Sigmoid colon (tissue), 7 donors: ENCODE measurements at regions of chr11 and their contacts with region 1.

Region 1: DNA sequence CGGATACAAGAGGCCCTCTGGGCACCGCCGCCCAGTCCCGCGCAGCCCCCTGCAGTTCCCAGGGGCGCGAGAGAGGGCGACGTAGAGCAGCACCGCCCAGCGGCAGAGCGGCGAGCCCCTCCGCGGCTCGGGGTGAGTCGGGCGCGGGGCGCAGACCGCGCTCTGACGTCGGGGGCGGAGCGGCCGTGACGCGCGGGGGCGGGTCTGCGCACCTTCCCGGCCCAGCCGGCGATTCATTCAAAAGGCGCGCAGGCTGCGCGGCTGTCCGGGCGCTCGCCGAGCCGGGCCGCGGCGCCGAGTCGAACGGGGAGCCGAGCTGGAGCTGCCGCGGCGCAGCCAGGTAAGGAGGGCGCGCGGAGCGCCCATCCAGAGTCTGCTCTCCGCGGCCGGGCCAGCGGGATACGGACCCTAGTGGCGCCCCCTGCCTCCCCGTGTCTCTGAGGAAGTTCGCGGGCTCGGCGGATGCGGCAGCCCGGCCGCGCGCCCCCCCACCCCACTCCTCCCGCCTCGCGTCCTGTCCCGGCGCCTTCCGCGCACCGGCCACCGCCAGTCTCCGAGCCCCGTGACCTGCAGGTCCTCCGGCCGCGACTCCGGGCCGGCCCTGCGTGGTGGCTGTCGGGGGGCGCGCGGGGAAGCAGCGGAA is at the start of gene RELT:
- DNase-seq: peak; percentile 93
- H3K4me3 ChIP-seq: peak within 1 kb of the TSS; percentile 31 to 68 (median 62)
- H3K27ac ChIP-seq: peak within 1 kb of the TSS; percentile 77 to 87 (median 84)
- H3K4me1 ChIP-seq: peaks cover 0 to 18% (median 15%) of the 10 kb centered on the region in 4 donors
- H3K27me3 ChIP-seq: no peaks in the 10 kb centered on the region
- CTCF ChIP-seq: peak; percentile 84 to 90 (median 85)
- EP300 ChIP-seq: no peak
- POLR2A ChIP-seq: no peak
- total RNA-seq, gene RELT: 0.28 to 1.8 (median 0.95) TPM

Region 2: DNA sequence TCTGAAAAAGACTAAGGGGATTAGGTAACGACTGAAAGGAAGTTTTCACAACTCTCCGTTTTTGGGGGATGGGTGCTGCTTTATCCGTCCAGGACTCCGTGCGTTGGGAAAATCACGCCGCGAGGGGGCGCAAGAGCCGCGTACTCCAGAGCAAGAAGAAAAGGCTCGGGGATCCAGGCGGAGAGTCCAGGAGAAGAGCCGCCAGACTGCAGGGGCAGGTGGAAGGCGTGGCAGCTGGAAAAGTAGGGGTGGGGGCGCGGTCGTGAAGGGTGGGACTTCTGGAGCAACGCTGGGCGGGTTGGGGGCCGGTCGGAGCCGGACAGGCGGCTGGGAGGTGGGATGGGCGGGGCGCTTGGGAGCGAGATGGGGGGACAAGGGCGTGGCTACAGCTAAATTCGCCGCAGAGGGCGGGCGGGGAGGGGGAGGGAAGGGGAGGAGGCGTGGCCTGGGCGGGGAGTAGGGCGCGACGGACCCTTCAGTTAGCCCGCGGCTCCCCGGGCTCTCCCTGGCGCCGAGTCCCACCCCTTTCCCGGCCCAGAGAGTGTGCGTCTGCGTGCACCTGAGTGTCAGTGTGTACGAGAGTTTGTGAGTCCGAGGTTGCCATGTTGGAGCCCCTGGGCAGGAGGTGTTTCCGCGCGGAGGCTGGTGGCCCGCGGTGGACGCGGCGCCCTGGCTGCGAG is 68.8 kb before region 1 on chr11:
- intact Hi-C with region 1: loop called (anchors 1 kb)
- DNase-seq: peak; percentile 99
- H3K4me3 ChIP-seq: peak overlapping the region; percentile 59 to 85 (median 68)
- H3K27ac ChIP-seq: peak overlapping the region; percentile 94 to 100 (median 98)
- H3K4me1 ChIP-seq: peaks cover 0 to 46% (median 40%) of the 10 kb centered on the region in 4 donors
- H3K27me3 ChIP-seq: no peaks in the 10 kb centered on the region
- CTCF ChIP-seq: peak; percentile 85 to 94 (median 93)
- EP300 ChIP-seq: no peak
- POLR2A ChIP-seq: peak; percentile 35 to 56

Region 3: GRCh38 chr11:73350908-73351636 is 25.2 kb before region 1 on chr11:
- intact Hi-C with region 1: loop called (anchors 2 kb)
- DNase-seq: peak; percentile 79
- H3K4me3 ChIP-seq: no peak overlapping the region
- H3K27ac ChIP-seq: peak overlapping the region in 3 of 4 donors; percentile 48 to 59 (median 55)
- H3K4me1 ChIP-seq: peaks cover 0 to 25% (median 9%) of the 10 kb centered on the region in 4 donors
- H3K27me3 ChIP-seq: no peaks in the 10 kb centered on the region
- CTCF ChIP-seq: peak; percentile 78 to 94 (median 86)
- EP300 ChIP-seq: no peak
- POLR2A ChIP-seq: no peak

Region 4: DNA sequence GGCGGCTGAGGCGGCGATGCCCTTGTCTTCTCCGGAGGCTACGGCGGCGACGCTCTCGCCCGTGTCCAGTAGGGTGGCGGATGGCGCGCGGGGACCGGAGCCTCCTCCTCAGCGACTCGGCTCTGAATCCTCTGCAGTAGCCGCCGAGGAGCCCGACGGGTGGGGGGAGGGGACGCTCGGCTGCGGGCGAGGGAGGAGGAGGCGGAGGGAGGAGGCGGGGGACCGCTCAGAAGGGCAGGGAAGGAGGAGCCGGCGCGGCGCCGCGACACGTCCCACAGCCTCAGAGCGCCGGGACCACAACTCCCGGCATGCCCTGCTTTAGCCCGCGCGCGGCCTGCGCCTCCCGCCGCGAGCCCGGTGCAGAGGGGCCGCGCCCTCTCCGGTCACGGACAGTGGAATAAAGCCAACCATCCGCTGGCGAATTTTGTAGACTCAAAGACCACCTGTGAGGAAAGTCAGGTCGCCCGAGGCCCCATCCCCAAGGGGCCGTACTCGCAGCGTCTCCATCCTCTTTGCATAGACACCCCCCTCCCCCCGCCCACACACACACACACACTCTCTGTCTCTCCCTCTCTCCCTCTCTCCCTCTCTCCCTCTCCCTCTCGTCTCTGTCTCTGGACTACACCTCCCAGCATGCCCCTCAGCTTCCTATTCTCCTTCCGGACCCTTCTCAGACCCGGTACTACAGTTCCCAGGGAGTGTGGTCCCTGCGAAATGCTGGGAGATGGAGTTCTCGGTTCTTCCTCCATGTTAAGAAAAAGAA is 221.9 kb after region 1 on chr11 and contains the start of gene FAM168A:
- intact Hi-C with region 1: loop called (anchors 2 kb)
- DNase-seq: peak; percentile 97
- H3K4me3 ChIP-seq: peak within 1 kb of the TSS; percentile 87 to 98 (median 92)
- H3K27ac ChIP-seq: peak within 1 kb of the TSS; percentile 78 to 88 (median 87)
- H3K4me1 ChIP-seq: peaks cover 0 to 23% (median 16%) of the 10 kb centered on the region in 4 donors
- H3K27me3 ChIP-seq: no peaks in the 10 kb centered on the region
- CTCF ChIP-seq: peak in 2 of 4 experiments; percentile 20 to 34
- EP300 ChIP-seq: peak in 1 of 4 donors; percentile 13
- POLR2A ChIP-seq: peak; percentile 55 to 58
- total RNA-seq, gene FAM168A: 20.7 to 37.7 (median 26.3) TPM